PC-3 (cell line): ENCODE measurements at regions of chr17 and their contacts with region 1.

Region 1: GRCh38 chr17:62109378-62109902 is 44.4 kb upstream of the MED13 start:
- DNase-seq: peak; percentile 95
- ATAC-seq: peak; percentile 83
- H3K4me3 ChIP-seq: no peak overlapping the region
- H3K27ac ChIP-seq: no peak overlapping the region
- H3K4me1 ChIP-seq: peaks cover 25% of the 10 kb centered on the region
- H3K27me3 ChIP-seq: no peaks in the 10 kb centered on the region
- CTCF ChIP-seq: peak; percentile 99

Region 2: DNA sequence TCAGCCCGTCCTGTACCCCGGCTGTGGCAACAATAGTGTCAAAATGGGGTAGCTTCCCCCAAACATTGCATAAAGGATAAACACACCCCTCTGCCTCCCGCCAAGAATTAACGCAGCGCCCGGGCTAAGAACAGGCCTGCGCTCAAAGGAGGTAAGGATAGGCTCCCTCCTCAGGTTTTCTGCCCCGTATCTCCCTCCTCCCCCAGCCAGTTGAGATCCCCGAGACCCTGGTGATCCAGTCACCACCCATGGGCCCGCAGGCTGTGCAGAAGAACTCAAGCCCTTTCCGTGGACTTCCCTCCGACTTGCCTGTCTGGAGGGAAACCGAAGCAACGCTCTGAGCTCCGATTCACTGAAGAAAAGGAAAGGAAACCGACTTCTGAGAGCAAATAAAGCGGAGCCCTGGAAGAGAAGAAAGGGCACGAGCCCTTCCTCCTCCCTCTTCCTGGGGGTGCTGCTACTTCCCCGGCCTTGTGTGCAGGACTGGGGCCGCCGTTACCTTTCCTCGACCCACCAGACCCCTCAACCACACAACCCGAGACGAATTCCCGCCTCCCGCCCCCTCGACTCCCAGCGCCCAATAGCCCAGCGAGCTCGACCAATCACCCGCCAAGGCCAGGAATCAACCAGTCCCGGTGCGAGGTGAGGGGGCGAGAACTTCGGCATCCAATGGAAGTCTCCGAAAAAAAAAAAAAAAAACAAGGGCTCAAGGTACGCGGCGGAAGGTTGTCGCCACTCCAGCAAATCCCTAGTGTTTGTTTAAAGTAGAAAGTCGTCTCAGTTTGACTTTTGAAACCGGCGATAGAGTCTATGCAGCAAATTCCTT is 246.3 kb before region 1 on chr17 and contains the start of gene BRIP1:
- CTCF ChIA-PET with region 1: interaction called, 14 read pairs
- POLR2A ChIA-PET with region 1: no interaction called
- intact Hi-C with region 1: loop called (anchors 2 kb)
- DNase-seq: peak; percentile 98
- ATAC-seq: peak; percentile 91
- H3K4me3 ChIP-seq: peak within 1 kb of the TSS; percentile 79
- H3K27ac ChIP-seq: peak within 1 kb of the TSS; percentile 51
- H3K4me1 ChIP-seq: peaks cover 34% of the 10 kb centered on the region
- H3K27me3 ChIP-seq: no peaks in the 10 kb centered on the region
- CTCF ChIP-seq: no peak
- total RNA-seq, gene BRIP1: 13.8 and 21.1 TPM in 2 replicates

Region 3: GRCh38 chr17:61972311-61972710 is 137.1 kb before region 1 on chr17:
- CTCF ChIA-PET with region 1: no interaction called
- POLR2A ChIA-PET with region 1: no interaction called
- intact Hi-C with region 1: no loop called
- DNase-seq: no peak
- ATAC-seq: no peak
- H3K4me3 ChIP-seq: no peak overlapping the region
- H3K27ac ChIP-seq: no peak overlapping the region
- H3K4me1 ChIP-seq: no peaks in the 10 kb centered on the region
- H3K27me3 ChIP-seq: no peaks in the 10 kb centered on the region
- CTCF ChIP-seq: no peak

Region 4: GRCh38 chr17:61997664-61998063 is 111.8 kb before region 1 on chr17:
- CTCF ChIA-PET with region 1: interaction called, 8 read pairs
- POLR2A ChIA-PET with region 1: no interaction called
- intact Hi-C with region 1: loop called (anchors 5 kb)
- DNase-seq: peak; percentile 83
- ATAC-seq: peak; percentile 99
- H3K4me3 ChIP-seq: no peak overlapping the region
- H3K27ac ChIP-seq: peak overlapping the region; percentile 86
- H3K4me1 ChIP-seq: peaks cover 14% of the 10 kb centered on the region
- H3K27me3 ChIP-seq: no peaks in the 10 kb centered on the region
- CTCF ChIP-seq: no peak

Region 5: GRCh38 chr17:62045109-62045905 is 64.1 kb before region 1 on chr17:
- CTCF ChIA-PET with region 1: no interaction called
- POLR2A ChIA-PET with region 1: no interaction called
- intact Hi-C with region 1: no loop called
- DNase-seq: no peak
- ATAC-seq: no peak
- H3K4me3 ChIP-seq: no peak overlapping the region
- H3K27ac ChIP-seq: no peak overlapping the region
- H3K4me1 ChIP-seq: peaks cover 1% of the 10 kb centered on the region; the same call in 1 of the 2 replicates
- H3K27me3 ChIP-seq: no peaks in the 10 kb centered on the region
- CTCF ChIP-seq: no peak

Region 6: DNA sequence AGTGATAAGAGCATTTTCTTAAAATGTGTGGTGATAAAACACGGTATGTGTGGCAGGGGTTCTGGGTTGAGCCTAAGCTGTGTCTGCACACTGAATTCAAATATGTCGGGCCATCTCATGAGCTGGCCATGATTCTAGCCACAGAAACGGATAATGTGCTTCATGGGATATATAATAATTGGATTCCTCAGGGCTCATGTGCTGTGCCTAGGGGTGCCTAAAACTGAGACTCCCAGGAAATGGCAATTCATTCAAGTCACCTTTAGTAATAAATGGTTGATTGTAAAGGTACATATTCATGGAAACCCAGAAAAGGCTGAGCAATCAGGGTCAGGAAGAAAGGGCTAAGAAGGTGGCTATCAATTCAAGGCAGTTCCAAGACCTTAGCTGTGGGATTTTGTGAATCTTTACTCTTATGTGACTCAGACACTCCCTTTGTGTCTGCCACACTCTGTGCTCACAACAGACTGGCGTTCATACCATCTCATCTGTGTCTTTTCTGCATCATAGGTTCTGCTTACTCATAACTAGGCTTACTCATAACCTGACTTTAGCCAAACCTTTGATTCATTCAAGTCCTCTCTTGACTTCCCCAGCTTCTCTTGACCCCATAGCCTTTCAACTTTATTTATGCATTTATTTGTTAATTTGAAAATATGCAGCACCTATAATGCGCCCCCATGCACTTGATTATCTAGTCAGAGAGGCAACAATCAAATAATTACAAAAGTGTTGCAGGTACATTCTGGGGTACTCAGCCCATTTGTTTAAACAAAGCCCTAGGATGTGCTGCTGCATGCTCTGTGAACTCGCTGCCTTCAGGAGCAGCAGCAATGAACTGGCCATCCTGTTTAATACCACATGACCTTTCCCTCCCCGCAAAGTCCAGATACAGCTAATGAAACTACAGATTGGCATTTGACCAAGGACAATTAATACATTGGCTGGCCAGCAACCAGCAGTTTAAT is 16.0 kb before region 1 on chr17:
- CTCF ChIA-PET with region 1: interaction called, 16 read pairs
- POLR2A ChIA-PET with region 1: no interaction called
- intact Hi-C with region 1: loop called (anchors 1 kb)
- DNase-seq: peak; percentile 97
- ATAC-seq: peak; percentile 100
- H3K4me3 ChIP-seq: no peak overlapping the region
- H3K27ac ChIP-seq: peak overlapping the region; percentile 93
- H3K4me1 ChIP-seq: peaks cover 19% of the 10 kb centered on the region
- H3K27me3 ChIP-seq: no peaks in the 10 kb centered on the region
- CTCF ChIP-seq: no peak

Region 7: DNA sequence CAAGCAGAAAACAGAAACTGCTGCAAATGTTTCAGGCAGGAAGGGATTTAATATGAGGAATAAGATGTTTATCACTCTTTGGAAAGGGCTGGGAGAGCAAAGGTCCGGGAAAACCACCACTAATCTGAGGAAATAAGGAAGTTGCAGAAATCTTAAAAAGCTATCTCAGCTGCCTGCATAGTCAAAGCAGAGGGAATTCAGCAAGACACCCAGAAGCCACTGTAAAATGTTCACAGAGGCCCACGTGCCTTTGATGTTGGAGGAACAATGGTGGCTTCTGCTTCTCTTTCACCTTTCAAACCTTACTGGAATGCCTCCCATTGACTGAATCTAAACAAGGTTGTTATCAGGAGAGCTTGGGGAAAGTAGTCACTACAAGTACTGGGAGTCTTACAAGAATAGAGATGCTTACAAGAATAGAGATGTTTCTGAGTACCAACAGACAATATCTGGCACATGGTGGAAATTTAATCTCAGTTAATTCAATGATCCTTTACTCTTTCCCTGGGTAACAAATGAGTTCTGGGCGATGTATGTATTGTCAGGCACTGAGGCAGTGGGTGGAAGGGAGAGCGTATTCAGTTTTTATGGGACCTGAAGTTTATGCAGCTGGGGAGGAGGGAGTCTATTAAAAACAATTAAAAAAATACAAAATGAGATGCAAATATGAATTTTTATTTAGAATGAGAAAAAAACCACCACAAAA is 11.7 kb after region 1 on chr17:
- CTCF ChIA-PET with region 1: no interaction called
- POLR2A ChIA-PET with region 1: no interaction called
- intact Hi-C with region 1: no loop called
- DNase-seq: no peak
- ATAC-seq: no peak
- H3K4me3 ChIP-seq: no peak overlapping the region
- H3K27ac ChIP-seq: no peak overlapping the region
- H3K4me1 ChIP-seq: no peaks in the 10 kb centered on the region
- H3K27me3 ChIP-seq: peaks cover 14% of the 10 kb centered on the region
- CTCF ChIP-seq: no peak

Region 8: DNA sequence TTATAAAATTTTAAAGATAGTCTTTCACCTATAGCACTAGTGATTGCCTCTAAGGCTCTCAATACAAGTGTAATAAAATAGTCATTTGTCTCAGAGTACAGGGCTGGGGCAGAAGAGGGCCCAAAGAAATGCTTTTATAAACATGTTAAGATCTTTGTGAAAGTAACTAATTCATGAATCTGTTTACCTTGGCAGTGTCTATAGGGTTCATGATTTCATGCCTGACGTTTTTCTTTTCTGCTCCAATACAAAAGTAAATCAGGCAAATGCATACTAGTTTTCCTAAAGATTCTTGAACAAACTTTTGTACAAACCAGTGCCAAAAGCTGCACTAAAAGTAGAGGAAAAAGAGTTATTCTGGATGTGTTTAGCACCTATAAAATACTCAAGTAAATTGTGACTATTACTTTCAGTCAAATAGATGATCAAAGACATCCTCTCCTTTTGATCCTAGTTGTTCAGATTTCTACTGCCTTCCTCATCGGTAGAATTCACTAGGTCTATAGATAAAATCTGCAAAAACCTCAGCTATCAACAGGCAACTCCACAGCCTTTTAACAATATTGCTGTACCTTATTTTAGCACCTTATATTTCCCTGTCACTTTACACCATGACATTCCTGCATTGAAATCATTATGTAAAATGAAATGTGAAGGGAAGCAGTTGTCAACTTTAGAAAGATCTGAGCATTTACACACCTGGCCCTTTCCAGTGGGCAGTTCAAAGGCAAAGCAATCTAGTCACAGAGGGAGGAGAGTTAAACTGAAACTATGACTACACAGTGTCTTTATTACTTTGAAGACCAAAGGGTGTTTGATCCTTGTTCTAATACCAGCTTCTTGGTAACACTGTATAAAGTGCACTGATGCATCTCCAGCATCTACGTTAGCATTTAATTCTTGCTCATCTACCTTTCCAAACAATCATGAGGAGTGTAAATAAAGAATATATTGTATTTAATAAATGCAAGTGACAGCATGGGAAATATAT is 55.6 kb after region 1 on chr17:
- CTCF ChIA-PET with region 1: interaction called, 3 read pairs
- POLR2A ChIA-PET with region 1: no interaction called
- intact Hi-C with region 1: loop called (anchors 2 kb)
- DNase-seq: peak; percentile 67
- ATAC-seq: peak; percentile 75
- H3K4me3 ChIP-seq: peak overlapping the region; percentile 19; the same call in 1 of the 2 replicates
- H3K27ac ChIP-seq: peak overlapping the region; percentile 96
- H3K4me1 ChIP-seq: peaks cover 34% of the 10 kb centered on the region
- H3K27me3 ChIP-seq: no peaks in the 10 kb centered on the region
- CTCF ChIP-seq: no peak